HAP-1 (cell line): ENCODE measurements at regions of chr10 and their contacts with region 1.

Region 1: DNA sequence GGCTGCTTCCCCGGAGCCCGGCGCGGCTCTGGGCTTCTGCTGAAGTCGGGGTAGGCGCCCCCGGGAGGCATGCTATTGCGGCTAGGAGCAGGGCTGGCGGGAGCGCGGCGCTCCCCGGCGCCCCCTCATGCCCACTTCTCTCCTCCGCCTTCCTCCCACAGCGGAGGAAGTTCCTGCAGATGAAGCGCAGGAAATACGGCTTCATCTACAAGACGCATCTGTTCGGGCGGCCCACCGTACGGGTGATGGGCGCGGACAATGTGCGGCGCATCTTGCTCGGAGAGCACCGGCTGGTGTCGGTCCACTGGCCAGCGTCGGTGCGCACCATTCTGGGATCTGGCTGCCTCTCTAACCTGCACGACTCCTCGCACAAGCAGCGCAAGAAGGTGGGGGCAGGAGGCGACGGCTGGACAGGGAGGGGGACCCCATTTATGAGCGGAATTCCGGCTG is 479 bp downstream of the CYP26A1 start:
- DNase-seq: peak; percentile 59 to 77
- H3K4me3 ChIP-seq: peak overlapping the region; percentile 45
- H3K4me1 ChIP-seq: peaks cover 6% of the 10 kb centered on the region
- H3K27me3 ChIP-seq: no peaks in the 10 kb centered on the region

Region 2: DNA sequence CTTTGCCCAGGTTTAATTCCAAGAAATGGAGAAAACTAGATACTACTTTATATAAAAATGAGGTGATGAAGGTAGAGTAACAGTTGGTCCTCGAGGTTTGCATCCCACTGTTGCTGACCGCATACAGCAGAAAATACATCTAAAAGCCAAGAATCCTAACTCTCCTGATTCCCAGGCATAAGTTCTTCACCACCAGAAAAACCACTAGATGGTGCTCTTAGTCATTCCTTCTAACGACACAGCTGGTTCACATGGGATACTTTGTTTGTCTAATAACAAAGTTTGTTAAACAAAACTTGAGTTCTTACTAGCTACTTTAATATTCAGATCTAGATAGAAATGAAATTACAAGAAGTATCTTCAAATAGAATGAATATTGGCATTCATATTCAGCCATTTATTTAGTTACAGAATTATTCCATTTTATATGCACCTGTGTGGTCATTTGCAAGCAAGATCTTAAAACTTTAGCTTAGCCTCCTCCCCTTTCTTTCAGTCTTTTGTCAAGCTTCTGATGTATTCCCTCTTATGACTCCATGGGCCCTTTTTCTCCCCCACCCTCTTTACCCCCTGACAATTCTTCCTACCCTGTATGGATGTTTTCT is 67.6 kb before region 1 on chr10:
- in situ Hi-C with region 1: loop called (anchors 10 kb)
- DNase-seq: peak in 1 of 2 experiments; percentile 67
- H3K4me3 ChIP-seq: no peak overlapping the region
- H3K4me1 ChIP-seq: no peaks in the 10 kb centered on the region
- H3K27me3 ChIP-seq: no peaks in the 10 kb centered on the region